ENCODE measurements at regions of chr6 and their contacts with region 1.

Region 1: DNA sequence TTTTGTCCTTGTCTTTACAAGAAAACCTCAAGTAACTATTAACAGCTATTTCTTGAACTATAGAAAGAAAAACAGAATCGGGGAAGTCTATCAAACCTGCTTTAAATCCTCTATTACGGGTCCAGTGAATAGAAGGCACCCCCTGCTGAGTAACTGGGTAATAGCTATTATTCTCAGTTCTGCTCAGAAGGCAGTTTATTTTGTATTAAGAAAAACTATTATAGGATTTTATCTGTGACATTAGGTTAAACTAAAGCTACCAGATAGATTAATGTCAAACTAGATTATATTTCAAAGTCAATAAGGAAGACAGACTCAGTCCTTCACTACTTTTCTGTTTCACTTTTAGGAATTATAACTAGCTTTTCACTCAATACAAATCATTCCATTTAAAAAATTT is 93.7 kb downstream of the DST start:
- DNase-seq: no peak
- ATAC-seq: no peak
- H3K4me3 ChIP-seq: no peak overlapping the region
- H3K4me3 Mint-ChIP-seq: no peak overlapping the region
- H3K27ac ChIP-seq: no peak overlapping the region
- H3K27ac Mint-ChIP-seq: no peak overlapping the region
- H3K4me1 ChIP-seq: no peaks in the 10 kb centered on the region
- H3K4me1 Mint-ChIP-seq: no peaks in the 10 kb centered on the region
- H3K27me3 ChIP-seq: no peaks in the 10 kb centered on the region
- H3K27me3 Mint-ChIP-seq: no peaks in the 10 kb centered on the region
- CTCF ChIP-seq: no peak

Region 2: DNA sequence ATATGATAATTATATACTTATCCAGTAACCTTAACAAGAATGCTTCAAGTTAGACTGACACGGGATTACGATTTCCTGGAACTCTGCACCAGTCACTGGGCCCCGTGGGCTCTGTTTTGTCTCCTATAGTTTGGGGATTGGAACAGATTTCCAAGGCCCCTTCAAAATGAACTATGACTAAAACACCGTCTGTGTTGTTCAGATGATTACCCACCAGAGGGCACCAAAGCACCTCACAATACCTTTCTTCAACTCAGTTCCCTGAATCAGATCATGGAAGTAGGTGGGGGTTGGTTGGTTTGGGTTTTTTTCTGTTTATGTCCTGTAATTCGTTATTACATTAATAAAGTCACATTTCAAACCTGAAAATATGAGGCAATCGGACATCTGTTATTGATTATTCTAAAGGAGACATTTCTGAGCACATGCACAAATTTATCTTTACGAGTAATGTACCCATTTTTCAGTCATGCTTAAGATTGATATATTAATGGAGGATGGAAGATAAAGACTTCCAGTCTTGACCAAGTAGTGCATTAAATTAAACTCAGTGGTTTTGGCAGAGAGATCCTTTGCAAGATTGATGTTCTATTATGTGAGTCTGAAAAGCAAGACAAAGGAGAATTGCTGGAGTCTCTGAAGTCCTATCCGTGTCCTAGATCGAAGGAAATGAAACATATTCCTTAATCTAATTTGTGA is 189.7 kb before region 1 on chr6:
- CTCF ChIA-PET with region 1: no interaction called
- POLR2A ChIA-PET with region 1: no interaction called
- intact Hi-C with region 1: loop called (anchors 1 kb)
- DNase-seq: peak; percentile 64
- ATAC-seq: peak; percentile 56
- H3K4me3 ChIP-seq: no peak overlapping the region
- H3K4me3 Mint-ChIP-seq: no peak overlapping the region
- H3K27ac ChIP-seq: no peak overlapping the region
- H3K27ac Mint-ChIP-seq: no peak overlapping the region
- H3K4me1 ChIP-seq: no peaks in the 10 kb centered on the region
- H3K4me1 Mint-ChIP-seq: no peaks in the 10 kb centered on the region
- H3K27me3 ChIP-seq: no peaks in the 10 kb centered on the region
- H3K27me3 Mint-ChIP-seq: no peaks in the 10 kb centered on the region
- CTCF ChIP-seq: peak; percentile 95

Region 3: DNA sequence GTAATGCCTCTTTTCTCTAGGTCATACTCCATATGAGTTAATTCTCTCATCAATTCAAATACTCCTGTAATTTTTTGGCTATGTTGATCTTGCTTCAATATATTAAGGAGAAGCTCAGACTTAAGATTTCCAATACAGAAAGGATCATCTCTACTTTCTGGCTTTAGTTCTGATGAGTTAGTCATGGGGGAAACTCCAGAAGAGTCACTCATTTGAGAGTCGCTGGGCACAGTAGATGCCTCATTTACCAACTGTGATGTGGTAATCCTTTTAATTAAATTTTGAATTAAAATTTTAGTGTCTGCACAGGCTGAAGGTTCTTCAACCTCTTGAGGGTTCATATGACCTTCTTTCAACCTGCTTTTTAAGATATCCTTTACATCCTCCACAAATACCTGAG is 55.2 kb after region 1 on chr6:
- CTCF ChIA-PET with region 1: no interaction called
- POLR2A ChIA-PET with region 1: no interaction called
- intact Hi-C with region 1: no loop called
- DNase-seq: no peak
- ATAC-seq: no peak
- H3K4me3 ChIP-seq: no peak overlapping the region
- H3K4me3 Mint-ChIP-seq: no peak overlapping the region
- H3K27ac ChIP-seq: no peak overlapping the region
- H3K27ac Mint-ChIP-seq: no peak overlapping the region
- H3K4me1 ChIP-seq: no peaks in the 10 kb centered on the region
- H3K4me1 Mint-ChIP-seq: no peaks in the 10 kb centered on the region
- H3K27me3 ChIP-seq: no peaks in the 10 kb centered on the region
- H3K27me3 Mint-ChIP-seq: peaks cover 18% of the 10 kb centered on the region
- CTCF ChIP-seq: no peak

Region 4: GRCh38 chr6:56730663-56731529 is 181.9 kb after region 1 on chr6:
- CTCF ChIA-PET with region 1: no interaction called
- POLR2A ChIA-PET with region 1: no interaction called
- intact Hi-C with region 1: no loop called
- DNase-seq: no peak
- ATAC-seq: no peak
- H3K4me3 ChIP-seq: no peak overlapping the region
- H3K4me3 Mint-ChIP-seq: no peak overlapping the region
- H3K27ac ChIP-seq: no peak overlapping the region
- H3K27ac Mint-ChIP-seq: no peak overlapping the region
- H3K4me1 ChIP-seq: no peaks in the 10 kb centered on the region
- H3K4me1 Mint-ChIP-seq: no peaks in the 10 kb centered on the region
- H3K27me3 ChIP-seq: no peaks in the 10 kb centered on the region
- H3K27me3 Mint-ChIP-seq: peaks cover 3% of the 10 kb centered on the region
- CTCF ChIP-seq: no peak

Measured in B cell (primary cell).